ENCODE measurements at regions of chr2 and their contacts with region 1.

Region 1: DNA sequence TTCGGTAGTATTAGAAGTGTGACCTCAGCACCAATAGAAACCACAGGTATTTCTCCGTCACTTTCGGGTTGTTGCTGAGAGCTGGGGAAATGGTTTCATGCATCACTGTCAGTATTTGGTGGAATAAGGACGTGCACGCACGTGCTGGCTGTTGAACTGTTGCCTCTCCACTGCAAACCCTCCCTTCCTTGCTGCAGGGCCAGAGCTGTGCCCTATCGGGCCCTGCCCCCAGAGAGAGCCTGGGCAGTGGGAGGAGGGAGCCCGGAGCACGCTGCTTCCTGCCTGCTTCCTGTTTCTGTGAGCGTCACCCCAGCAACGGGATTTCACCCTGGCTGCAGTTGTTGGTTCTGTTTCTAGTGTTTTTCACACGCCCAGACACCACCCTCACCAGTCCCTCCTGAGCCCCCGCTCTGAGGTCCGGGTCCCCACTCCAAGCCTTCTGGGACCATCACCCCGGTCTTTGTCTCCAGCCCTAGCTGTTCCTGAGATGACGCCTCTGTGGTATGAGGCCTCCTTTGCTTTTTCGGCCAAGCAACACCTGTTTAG is 47.4 kb downstream of the LRRFIP1 start:
- DNase-seq: peak; percentile 70 to 97 (median 82)
- ATAC-seq: peak; percentile 59
- H3K4me3 ChIP-seq: peak overlapping the region; percentile 52
- H3K4me3 Mint-ChIP-seq: peak overlapping the region; percentile 82
- H3K27ac ChIP-seq: peak overlapping the region; percentile 97 to 99
- H3K27ac Mint-ChIP-seq: peak overlapping the region; percentile 96
- H3K4me1 ChIP-seq: peaks cover 51% of the 10 kb centered on the region
- H3K4me1 Mint-ChIP-seq: peaks cover 55% of the 10 kb centered on the region
- H3K27me3 ChIP-seq: no peaks in the 10 kb centered on the region
- H3K27me3 Mint-ChIP-seq: no peaks in the 10 kb centered on the region
- CTCF ChIP-seq: no peak

Region 2: GRCh38 chr2:237434866-237435311 is 239.9 kb before region 1 on chr2:
- CTCF ChIA-PET with region 1: no interaction called
- POLR2A ChIA-PET with region 1: interaction called, 4 read pairs
- intact Hi-C with region 1: loop called in 1 of 2 experiments (anchors 10 kb)
- DNase-seq: peak; percentile 29 to 90 (median 72)
- ATAC-seq: peak; percentile 65
- H3K4me3 ChIP-seq: peak overlapping the region; percentile 22
- H3K4me3 Mint-ChIP-seq: peak overlapping the region; percentile 87
- H3K27ac ChIP-seq: peak overlapping the region in 1 of 2 donors; percentile 48
- H3K27ac Mint-ChIP-seq: peak overlapping the region; percentile 83
- H3K4me1 ChIP-seq: peaks cover 72% of the 10 kb centered on the region
- H3K4me1 Mint-ChIP-seq: peaks cover 84% of the 10 kb centered on the region
- H3K27me3 ChIP-seq: no peaks in the 10 kb centered on the region
- H3K27me3 Mint-ChIP-seq: no peaks in the 10 kb centered on the region
- CTCF ChIP-seq: no peak

Region 3: DNA sequence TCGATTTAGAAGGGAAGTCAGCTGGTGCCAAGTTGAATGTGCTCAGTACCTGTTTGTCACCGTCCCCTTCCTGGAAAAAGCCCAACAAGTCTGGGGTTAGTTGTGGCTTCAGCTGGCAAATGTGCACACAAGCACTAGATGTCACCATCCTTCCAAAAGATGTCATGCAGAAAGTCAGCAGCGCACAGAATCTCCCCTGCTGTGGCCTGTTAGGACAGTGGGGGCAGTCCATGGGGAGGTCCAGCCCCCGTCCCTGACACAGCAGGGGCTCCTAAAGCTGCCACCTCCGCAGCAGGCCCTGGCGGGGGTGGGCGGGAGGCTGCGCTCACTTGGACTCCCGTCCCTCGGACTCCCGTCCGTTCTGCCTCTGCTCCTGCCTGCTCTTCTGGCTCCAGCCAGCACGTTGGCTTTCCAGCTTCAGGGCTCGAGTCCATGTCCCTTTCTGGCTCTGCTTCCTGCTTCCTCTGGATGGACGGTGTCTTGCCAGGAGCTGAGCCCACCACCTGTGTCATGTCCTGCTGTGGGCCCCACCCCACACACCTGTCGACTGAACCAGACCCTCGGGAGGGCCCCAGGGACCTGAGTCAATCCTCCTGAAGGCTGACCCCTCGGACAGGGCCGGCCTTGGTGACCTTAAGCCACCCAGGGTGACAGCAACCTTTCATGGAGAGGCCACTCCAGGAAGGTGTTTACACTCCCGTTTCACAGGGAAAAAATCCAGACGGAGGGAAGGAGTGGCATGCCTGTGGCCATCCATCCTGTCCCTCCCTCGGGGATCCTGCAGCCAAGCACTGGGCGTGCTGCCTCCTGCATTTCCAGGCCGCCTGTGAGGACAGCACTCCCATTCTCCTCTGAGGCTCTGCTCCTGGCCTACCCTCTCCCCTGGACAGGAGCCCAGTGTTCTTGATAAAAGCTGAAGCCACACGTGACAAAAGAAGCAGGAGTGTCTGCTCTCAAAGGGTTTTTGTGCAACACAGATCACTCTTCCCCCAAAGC is 92.8 kb before region 1 on chr2:
- CTCF ChIA-PET with region 1: interaction called, 4 read pairs
- POLR2A ChIA-PET with region 1: interaction called, 4 read pairs
- intact Hi-C with region 1: loop called (anchors 2 to 5 kb)
- DNase-seq: peak in 11 of 14 experiments; percentile 18 to 73 (median 45)
- ATAC-seq: peak; percentile 94
- H3K4me3 ChIP-seq: no peak overlapping the region
- H3K4me3 Mint-ChIP-seq: no peak overlapping the region
- H3K27ac ChIP-seq: no peak overlapping the region
- H3K27ac Mint-ChIP-seq: no peak overlapping the region
- H3K4me1 ChIP-seq: peaks cover 7% of the 10 kb centered on the region
- H3K4me1 Mint-ChIP-seq: peaks cover 4% of the 10 kb centered on the region
- H3K27me3 ChIP-seq: no peaks in the 10 kb centered on the region
- H3K27me3 Mint-ChIP-seq: no peaks in the 10 kb centered on the region
- CTCF ChIP-seq: peak; percentile 38

Region 4: DNA sequence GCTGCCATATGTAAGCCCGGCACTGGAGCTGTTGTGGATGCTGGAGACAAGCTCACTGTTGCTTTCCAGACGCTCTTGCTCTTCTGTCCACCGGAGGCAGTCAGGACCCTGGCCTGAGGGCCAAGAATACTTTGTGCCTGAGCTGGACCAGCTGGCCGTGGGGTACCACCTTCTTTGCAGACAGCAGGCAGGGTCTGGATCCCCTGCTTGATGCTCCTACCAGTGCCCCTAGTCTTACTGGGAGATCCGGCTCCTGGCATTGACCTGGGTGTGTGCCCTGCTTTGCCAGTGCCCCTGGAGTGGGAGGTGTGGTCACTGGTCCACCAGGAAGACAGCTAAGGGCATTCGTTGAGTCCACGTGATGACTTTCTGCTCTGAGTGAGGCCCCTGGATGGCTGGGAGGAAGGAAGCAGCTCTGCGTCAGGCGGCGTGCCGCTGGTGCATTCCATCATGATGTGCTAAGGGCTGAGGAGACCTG is 11.9 kb after region 1 on chr2:
- CTCF ChIA-PET with region 1: interaction called, 254 read pairs
- POLR2A ChIA-PET with region 1: interaction called, 235 read pairs
- intact Hi-C with region 1: loop called (anchors 1 kb)
- DNase-seq: peak in 2 of 14 experiments; percentile 62 to 73
- ATAC-seq: no peak
- H3K4me3 ChIP-seq: no peak overlapping the region
- H3K4me3 Mint-ChIP-seq: no peak overlapping the region
- H3K27ac ChIP-seq: peak overlapping the region; percentile 89 to 96
- H3K27ac Mint-ChIP-seq: peak overlapping the region; percentile 98
- H3K4me1 ChIP-seq: peaks cover 62% of the 10 kb centered on the region
- H3K4me1 Mint-ChIP-seq: peaks cover 55% of the 10 kb centered on the region
- H3K27me3 ChIP-seq: no peaks in the 10 kb centered on the region
- H3K27me3 Mint-ChIP-seq: no peaks in the 10 kb centered on the region
- CTCF ChIP-seq: no peak

Region 5: GRCh38 chr2:237700512-237701032 is 25.8 kb after region 1 on chr2:
- CTCF ChIA-PET with region 1: interaction called, 254 read pairs
- POLR2A ChIA-PET with region 1: interaction called, 235 read pairs
- intact Hi-C with region 1: loop called (anchors 2 to 5 kb)
- DNase-seq: peak in 11 of 14 experiments; percentile 35 to 92 (median 59)
- ATAC-seq: peak; percentile 67
- H3K4me3 ChIP-seq: no peak overlapping the region
- H3K4me3 Mint-ChIP-seq: peak overlapping the region; percentile 83
- H3K27ac ChIP-seq: peak overlapping the region; percentile 57 to 64
- H3K27ac Mint-ChIP-seq: peak overlapping the region; percentile 93
- H3K4me1 ChIP-seq: peaks cover 99% of the 10 kb centered on the region
- H3K4me1 Mint-ChIP-seq: peaks cover 98% of the 10 kb centered on the region
- H3K27me3 ChIP-seq: no peaks in the 10 kb centered on the region
- H3K27me3 Mint-ChIP-seq: no peaks in the 10 kb centered on the region
- CTCF ChIP-seq: no peak

Region 6: GRCh38 chr2:237731663-237732062 is 56.9 kb after region 1 on chr2:
- CTCF ChIA-PET with region 1: interaction called, 15 read pairs
- POLR2A ChIA-PET with region 1: interaction called, 3 read pairs
- intact Hi-C with region 1: no loop called
- DNase-seq: peak in 3 of 14 experiments; percentile 35 to 54 (median 42)
- ATAC-seq: peak; percentile 54
- H3K4me3 ChIP-seq: no peak overlapping the region
- H3K4me3 Mint-ChIP-seq: peak overlapping the region; percentile 5
- H3K27ac ChIP-seq: no peak overlapping the region
- H3K27ac Mint-ChIP-seq: peak overlapping the region; percentile 61
- H3K4me1 ChIP-seq: peaks cover 54% of the 10 kb centered on the region
- H3K4me1 Mint-ChIP-seq: peaks cover 69% of the 10 kb centered on the region
- H3K27me3 ChIP-seq: no peaks in the 10 kb centered on the region
- H3K27me3 Mint-ChIP-seq: no peaks in the 10 kb centered on the region
- CTCF ChIP-seq: no peak

Region 7: DNA sequence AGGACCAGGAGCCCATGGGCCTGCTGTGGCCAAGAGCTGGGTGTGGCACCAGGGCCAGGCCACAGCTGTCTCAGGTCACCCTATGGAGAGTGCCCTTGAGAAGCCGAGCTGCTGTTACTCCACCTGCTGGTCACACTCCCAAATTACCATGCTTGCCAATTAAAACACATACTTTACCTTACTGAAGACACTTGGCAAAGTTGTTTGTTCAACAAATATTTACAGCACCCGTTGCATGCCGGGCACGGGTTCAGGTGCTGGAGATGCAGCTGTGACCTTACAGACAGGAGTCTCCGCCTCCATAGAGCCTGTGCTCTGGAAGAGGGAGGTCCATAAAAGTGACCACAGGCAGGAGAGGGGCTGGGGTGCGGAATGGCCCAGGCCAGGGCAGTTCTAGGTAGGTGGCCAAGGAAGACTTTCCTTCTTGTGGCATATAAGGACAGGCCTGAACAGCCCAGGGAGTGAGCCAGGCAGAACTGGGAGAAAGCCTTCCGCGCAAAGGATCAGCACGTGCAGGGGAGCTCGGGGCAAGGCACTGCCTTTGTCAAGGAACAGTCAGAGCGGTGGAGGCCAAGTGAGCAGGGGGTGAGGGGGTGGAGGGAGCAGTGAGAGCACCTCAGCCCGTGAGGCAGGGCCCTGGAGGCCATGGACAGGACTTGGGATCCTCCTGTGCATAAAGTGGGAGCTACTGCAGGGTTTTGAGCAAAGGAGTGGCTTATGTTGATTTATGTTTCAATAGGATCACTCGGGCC is 100.2 kb after region 1 on chr2:
- CTCF ChIA-PET with region 1: interaction called, 8 read pairs
- POLR2A ChIA-PET with region 1: no interaction called
- intact Hi-C with region 1: loop called in 1 of 2 experiments (anchors 1 kb)
- DNase-seq: peak in 9 of 14 experiments; percentile 12 to 66 (median 36)
- ATAC-seq: peak; percentile 70
- H3K4me3 ChIP-seq: no peak overlapping the region
- H3K4me3 Mint-ChIP-seq: no peak overlapping the region
- H3K27ac ChIP-seq: no peak overlapping the region
- H3K27ac Mint-ChIP-seq: peak overlapping the region; percentile 60
- H3K4me1 ChIP-seq: no peaks in the 10 kb centered on the region
- H3K4me1 Mint-ChIP-seq: no peaks in the 10 kb centered on the region
- H3K27me3 ChIP-seq: no peaks in the 10 kb centered on the region
- H3K27me3 Mint-ChIP-seq: no peaks in the 10 kb centered on the region
- CTCF ChIP-seq: peak; percentile 59

Region 8: GRCh38 chr2:237858294-237859081 is 183.7 kb after region 1 on chr2:
- CTCF ChIA-PET with region 1: no interaction called
- POLR2A ChIA-PET with region 1: no interaction called
- intact Hi-C with region 1: no loop called
- DNase-seq: peak in 9 of 14 experiments; percentile 11 to 73 (median 41)
- ATAC-seq: peak; percentile 64
- H3K4me3 ChIP-seq: no peak overlapping the region
- H3K4me3 Mint-ChIP-seq: peak overlapping the region; percentile 71
- H3K27ac ChIP-seq: no peak overlapping the region
- H3K27ac Mint-ChIP-seq: no peak overlapping the region
- H3K4me1 ChIP-seq: peaks cover 20% of the 10 kb centered on the region
- H3K4me1 Mint-ChIP-seq: peaks cover 5% of the 10 kb centered on the region
- H3K27me3 ChIP-seq: peaks cover 27 to 45% of the 10 kb centered on the region in 2 experiments
- H3K27me3 Mint-ChIP-seq: peaks cover 45% of the 10 kb centered on the region
- CTCF ChIP-seq: peak; percentile 47